ENCODE measurements at regions of chr5 and their contacts with region 1.

Region 1: GRCh38 chr5:10987930-10988504 is 227.0 kb upstream of the DAP start:
- DNase-seq: peak; percentile 69 to 85 (median 79)
- ATAC-seq: peak; percentile 86 to 89 (median 88)
- H3K4me3 ChIP-seq: no peak overlapping the region
- H3K27ac ChIP-seq: peak overlapping the region in 5 of 12 donors; percentile 10 to 84 (median 75)
- H3K4me1 ChIP-seq: peaks cover 0 to 24% (median 4%) of the 10 kb centered on the region in 12 donors
- H3K27me3 ChIP-seq: peaks cover 0 to 11% (median 0%) of the 10 kb centered on the region in 9 donors
- CTCF ChIP-seq: peak; percentile 48 to 78 (median 70)
- POLR2A ChIP-seq: no peak

Region 2: GRCh38 chr5:10595678-10596309 is 392.2 kb before region 1 on chr5:
- intact Hi-C with region 1: no loop called
- DNase-seq: peak in 3 of 5 donors; percentile 48 to 64 (median 61)
- ATAC-seq: peak; percentile 70 to 89 (median 82)
- H3K4me3 ChIP-seq: peak overlapping the region in 9 of 12 donors; percentile 17 to 47 (median 28)
- H3K27ac ChIP-seq: peak overlapping the region; percentile 6 to 85 (median 71)
- H3K4me1 ChIP-seq: peaks cover 0 to 54% (median 39%) of the 10 kb centered on the region in 12 donors
- H3K27me3 ChIP-seq: no peaks in the 10 kb centered on the region
- CTCF ChIP-seq: no peak
- POLR2A ChIP-seq: no peak

Region 3: DNA sequence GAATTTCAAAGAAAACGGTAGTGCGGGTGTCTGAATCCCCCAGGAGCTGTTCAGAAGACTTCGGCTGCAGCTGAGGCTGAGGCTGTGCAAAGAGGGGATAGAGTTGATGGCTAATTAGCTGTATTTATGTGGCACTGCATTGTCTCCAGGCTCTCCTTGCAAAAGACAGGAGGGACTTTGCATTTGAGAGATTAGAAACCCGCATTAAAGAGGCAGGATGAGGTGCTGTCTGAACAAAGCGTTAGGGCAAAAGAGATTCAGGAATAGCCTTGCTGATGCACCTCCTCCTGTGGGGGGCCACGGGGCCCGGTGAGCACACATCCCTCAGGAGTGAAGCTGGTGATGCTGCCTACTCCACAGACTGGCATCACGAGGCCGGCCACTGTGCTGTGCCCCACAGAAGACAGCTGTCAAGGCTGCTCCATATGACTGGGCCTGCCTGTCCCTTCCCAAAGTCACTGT is 116.7 kb after region 1 on chr5:
- intact Hi-C with region 1: loop called in 1 of 10 experiments (anchors 5 kb)
- DNase-seq: no peak
- ATAC-seq: no peak
- H3K4me3 ChIP-seq: no peak overlapping the region
- H3K27ac ChIP-seq: no peak overlapping the region
- H3K4me1 ChIP-seq: no peaks in the 10 kb centered on the region
- H3K27me3 ChIP-seq: no peaks in the 10 kb centered on the region
- CTCF ChIP-seq: no peak
- POLR2A ChIP-seq: no peak

Region 4: DNA sequence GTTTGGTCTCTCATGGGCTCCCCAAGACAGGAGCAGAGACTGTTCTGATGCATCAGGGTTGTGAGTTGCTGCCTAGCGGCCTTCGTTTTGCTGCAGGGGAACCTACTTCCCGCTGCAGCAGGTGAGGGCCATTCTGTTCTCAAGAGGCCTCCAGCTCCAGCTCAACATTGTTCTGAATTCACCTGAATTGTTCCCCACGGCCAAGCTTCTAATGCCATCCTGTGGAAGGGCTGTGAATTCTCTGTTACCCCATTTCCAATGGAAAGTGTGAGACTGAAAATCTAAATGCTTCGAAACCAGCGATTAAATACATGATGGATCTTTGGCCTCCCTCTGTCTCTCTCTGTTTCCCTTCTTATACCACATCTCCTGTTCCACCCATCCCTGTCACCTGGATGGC is 122.1 kb after region 1 on chr5:
- intact Hi-C with region 1: loop called in 2 of 10 experiments (anchors 5 kb)
- DNase-seq: no peak
- ATAC-seq: peak in 1 of 4 donors; percentile 55
- H3K4me3 ChIP-seq: no peak overlapping the region
- H3K27ac ChIP-seq: no peak overlapping the region
- H3K4me1 ChIP-seq: no peaks in the 10 kb centered on the region
- H3K27me3 ChIP-seq: no peaks in the 10 kb centered on the region
- CTCF ChIP-seq: peak in 3 of 12 donors; percentile 20 to 31 (median 20)
- POLR2A ChIP-seq: no peak

Region 5: GRCh38 chr5:11182441-11183268 is 194.6 kb after region 1 on chr5:
- intact Hi-C with region 1: loop called in 5 of 10 experiments (anchors 5 to 10 kb)
- DNase-seq: no peak
- ATAC-seq: peak in 1 of 4 donors; percentile 34
- H3K4me3 ChIP-seq: no peak overlapping the region
- H3K27ac ChIP-seq: no peak overlapping the region
- H3K4me1 ChIP-seq: peaks cover 0 to 9% (median 0%) of the 10 kb centered on the region in 12 donors
- H3K27me3 ChIP-seq: no peaks in the 10 kb centered on the region
- CTCF ChIP-seq: peak in 10 of 12 donors; percentile 24 to 63 (median 40)
- POLR2A ChIP-seq: no peak